ENCODE measurements at regions of chr3 and their contacts with region 1.

Region 1: DNA sequence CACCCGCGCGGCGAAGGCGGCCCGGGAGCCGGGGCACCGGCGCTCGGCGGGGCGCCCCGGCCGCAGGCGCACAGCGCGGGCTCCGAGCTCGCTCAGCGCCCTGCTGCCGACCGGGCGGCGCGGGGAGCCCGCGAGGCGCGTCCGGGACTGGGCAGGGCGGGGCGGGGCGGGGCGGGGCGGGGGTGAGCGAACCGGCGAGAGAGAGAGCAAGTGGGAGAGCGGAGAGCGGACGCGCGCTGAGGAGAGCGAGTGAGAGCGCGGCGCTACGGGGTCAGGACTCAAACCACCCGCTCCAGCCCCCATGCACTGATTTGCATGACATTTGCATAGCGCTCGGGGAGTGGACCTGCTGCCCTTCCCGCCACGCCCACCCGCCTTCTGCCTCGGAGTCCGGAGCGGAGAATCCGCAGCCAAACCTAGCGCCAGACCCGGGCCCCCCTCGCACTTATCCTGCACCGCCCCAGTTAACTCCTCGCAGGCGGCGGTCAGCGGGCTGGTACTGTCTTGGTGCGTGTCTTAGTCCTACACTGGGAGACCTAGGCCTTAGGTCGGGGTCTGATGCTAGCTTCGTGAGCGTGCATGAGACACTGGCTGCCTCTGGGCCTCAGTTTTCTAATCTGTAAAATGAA is at the start of gene MYLK:
- DNase-seq: peak; percentile 69 to 77
- ATAC-seq: peak; percentile 83 to 98 (median 96)
- H3K4me3 ChIP-seq: peak within 1 kb of the TSS; percentile 18 to 58 (median 50)
- H3K27ac ChIP-seq: no peak within 1 kb of the TSS
- H3K4me1 ChIP-seq: peaks cover 0 to 13% (median 8%) of the 10 kb centered on the region in 9 donors
- H3K27me3 ChIP-seq: peaks cover 0 to 56% (median 0%) of the 10 kb centered on the region in 7 donors
- CTCF ChIP-seq: no peak
- total RNA-seq, gene MYLK: 5.8 to 15.1 (median 11.6) TPM

Region 2: GRCh38 chr3:123745184-123745855 is 139.0 kb before region 1 on chr3:
- intact Hi-C with region 1: loop called in 2 of 10 experiments (anchors 10 kb)
- DNase-seq: no peak
- ATAC-seq: no peak
- H3K4me3 ChIP-seq: no peak overlapping the region
- H3K27ac ChIP-seq: no peak overlapping the region
- H3K4me1 ChIP-seq: peaks cover 0 to 8% (median under 1%) of the 10 kb centered on the region in 9 donors
- H3K27me3 ChIP-seq: no peaks in the 10 kb centered on the region
- CTCF ChIP-seq: peak in 3 of 9 donors; percentile 19 to 34 (median 29)

Region 3: GRCh38 chr3:123757281-123757940 is 126.9 kb before region 1 on chr3:
- intact Hi-C with region 1: loop called in 2 of 10 experiments (anchors 10 kb)
- DNase-seq: peak; percentile 30 to 42
- ATAC-seq: peak in 7 of 8 donors; percentile 55 to 82 (median 72)
- H3K4me3 ChIP-seq: no peak overlapping the region
- H3K27ac ChIP-seq: peak overlapping the region in 1 of 10 donors; percentile 47
- H3K4me1 ChIP-seq: peaks cover 0 to 27% (median 9%) of the 10 kb centered on the region in 9 donors
- H3K27me3 ChIP-seq: no peaks in the 10 kb centered on the region
- CTCF ChIP-seq: no peak

Region 4: GRCh38 chr3:123766193-123767019 is 117.9 kb before region 1 on chr3:
- intact Hi-C with region 1: loop called in 1 of 10 experiments (anchors 10 kb)
- DNase-seq: no peak
- ATAC-seq: peak in 2 of 8 donors; percentile 57 to 77
- H3K4me3 ChIP-seq: no peak overlapping the region
- H3K27ac ChIP-seq: no peak overlapping the region
- H3K4me1 ChIP-seq: peaks cover 0 to 4% (median 0%) of the 10 kb centered on the region in 9 donors
- H3K27me3 ChIP-seq: no peaks in the 10 kb centered on the region
- CTCF ChIP-seq: no peak